HepG2 (cell line): ENCODE measurements at regions of chr9 and their contacts with region 1.

Region 1: GRCh38 chr9:32136700-32137339 is 247.6 kb upstream of the ACO1 start:
- DNase-seq: peak; percentile 98
- ATAC-seq: peak; percentile 100
- H3K4me3 ChIP-seq: no peak overlapping the region
- H3K27ac ChIP-seq: no peak overlapping the region
- H3K4me1 ChIP-seq: peaks cover 25% of the 10 kb centered on the region
- H3K27me3 ChIP-seq: no peaks in the 10 kb centered on the region
- CTCF ChIP-seq: peak; percentile 74
- EP300 ChIP-seq: peak; percentile 56 to 90; a peak in 2 of 4 replicates
- POLR2A ChIP-seq: no peak
- RAD21 ChIP-seq: peak; percentile 52; the same call in 1 of the 2 replicates

Region 2: GRCh38 chr9:31848505-31849285 is 288.1 kb before region 1 on chr9:
- CTCF ChIA-PET with region 1: no interaction called
- POLR2A ChIA-PET with region 1: interaction called, 4 read pairs
- in situ Hi-C with region 1: no loop called
- intact Hi-C with region 1: loop called (anchors 1 kb)
- DNase-seq: peak; percentile 72
- ATAC-seq: peak; percentile 100
- H3K4me3 ChIP-seq: peak overlapping the region; percentile 72 to 83 (median 78)
- H3K27ac ChIP-seq: peak overlapping the region; percentile 77
- H3K4me1 ChIP-seq: peaks cover 20% of the 10 kb centered on the region
- H3K27me3 ChIP-seq: no peaks in the 10 kb centered on the region; a peak in 1 of 5 replicates
- CTCF ChIP-seq: no peak
- EP300 ChIP-seq: no peak
- POLR2A ChIP-seq: peak; percentile 83 to 90
- RAD21 ChIP-seq: no peak

Region 3: GRCh38 chr9:32004431-32005076 is 132.3 kb before region 1 on chr9:
- CTCF ChIA-PET with region 1: no interaction called
- POLR2A ChIA-PET with region 1: no interaction called
- in situ Hi-C with region 1: no loop called
- intact Hi-C with region 1: loop called (anchors 5 kb)
- DNase-seq: peak; percentile 89
- ATAC-seq: peak; percentile 99
- H3K4me3 ChIP-seq: peak overlapping the region; percentile 41 to 49 (median 41); a peak in 5 of 6 replicates
- H3K27ac ChIP-seq: peak overlapping the region; percentile 88
- H3K4me1 ChIP-seq: peaks cover 23% of the 10 kb centered on the region
- H3K27me3 ChIP-seq: no peaks in the 10 kb centered on the region
- CTCF ChIP-seq: no peak
- EP300 ChIP-seq: peak in 1 of 2 experiments; percentile 49; a peak in 1 of 4 replicates
- POLR2A ChIP-seq: peak in 1 of 2 experiments; percentile 25; a peak in 1 of 4 replicates
- RAD21 ChIP-seq: no peak

Region 4: DNA sequence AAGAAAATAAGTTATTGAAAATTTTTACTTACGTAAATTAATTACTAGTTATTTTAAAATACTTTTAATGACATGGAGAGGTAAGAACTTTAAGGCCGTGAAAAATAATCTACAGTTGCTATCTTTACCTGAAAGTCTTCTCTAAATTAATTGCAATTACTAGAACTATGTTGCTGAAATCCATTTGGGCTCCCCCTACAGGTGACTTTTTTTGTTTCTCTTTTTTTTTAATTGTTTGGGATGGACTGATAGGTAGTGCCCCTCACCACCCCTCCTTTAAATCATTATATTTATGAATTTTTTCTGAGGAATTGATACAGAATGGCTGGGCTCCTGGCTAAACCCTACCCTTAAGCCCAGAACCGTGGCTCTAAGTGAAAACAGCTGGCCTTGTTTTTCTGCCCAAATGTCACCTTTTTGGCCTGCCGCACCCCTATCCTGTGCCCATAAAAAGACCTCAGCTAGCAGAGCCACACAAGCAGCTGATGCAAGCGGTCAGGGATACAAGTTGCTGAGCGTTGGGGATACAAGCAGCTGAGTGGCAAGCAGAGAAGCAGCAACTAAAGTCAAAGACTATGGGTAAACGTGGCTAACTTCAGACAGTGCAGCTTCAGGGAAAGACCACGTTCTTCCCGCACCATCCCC is 67.5 kb before region 1 on chr9:
- CTCF ChIA-PET with region 1: no interaction called
- POLR2A ChIA-PET with region 1: no interaction called
- in situ Hi-C with region 1: no loop called
- intact Hi-C with region 1: loop called (anchors 10 kb)
- DNase-seq: peak; percentile 2
- ATAC-seq: no peak
- H3K4me3 ChIP-seq: no peak overlapping the region
- H3K27ac ChIP-seq: no peak overlapping the region
- H3K4me1 ChIP-seq: no peaks in the 10 kb centered on the region
- H3K27me3 ChIP-seq: no peaks in the 10 kb centered on the region
- CTCF ChIP-seq: no peak
- EP300 ChIP-seq: no peak
- POLR2A ChIP-seq: no peak
- RAD21 ChIP-seq: no peak

Region 5: GRCh38 chr9:32258482-32258881 is 121.7 kb after region 1 on chr9:
- CTCF ChIA-PET with region 1: no interaction called
- POLR2A ChIA-PET with region 1: no interaction called
- in situ Hi-C with region 1: no loop called
- intact Hi-C with region 1: loop called (anchors 5 kb)
- DNase-seq: no peak
- ATAC-seq: no peak
- H3K4me3 ChIP-seq: no peak overlapping the region
- H3K27ac ChIP-seq: no peak overlapping the region
- H3K4me1 ChIP-seq: peaks cover 20% of the 10 kb centered on the region
- H3K27me3 ChIP-seq: no peaks in the 10 kb centered on the region
- CTCF ChIP-seq: no peak
- EP300 ChIP-seq: no peak
- POLR2A ChIP-seq: no peak
- RAD21 ChIP-seq: no peak

Region 6: DNA sequence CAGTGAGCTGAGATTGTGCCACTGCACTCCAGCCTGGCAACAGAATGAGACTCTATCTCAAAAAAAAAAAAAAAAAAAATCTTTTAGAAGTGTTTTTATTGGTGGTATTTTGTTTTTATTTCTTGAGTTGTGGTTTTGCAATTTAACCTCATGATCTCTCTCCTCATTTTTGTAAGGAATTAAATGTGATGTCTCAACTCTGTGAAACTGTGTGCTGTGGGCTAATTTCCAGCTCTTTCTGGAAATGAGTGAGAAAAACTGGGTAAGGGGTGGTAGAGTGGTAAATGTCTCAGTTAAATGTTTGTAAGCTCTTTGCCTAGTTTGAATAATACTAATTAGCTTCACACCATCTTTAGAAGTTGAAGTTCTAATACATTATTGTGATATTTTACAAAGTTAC is 276.6 kb after region 1 on chr9:
- CTCF ChIA-PET with region 1: no interaction called
- POLR2A ChIA-PET with region 1: no interaction called
- in situ Hi-C with region 1: no loop called
- intact Hi-C with region 1: no loop called
- DNase-seq: no peak
- ATAC-seq: no peak
- H3K4me3 ChIP-seq: no peak overlapping the region
- H3K27ac ChIP-seq: no peak overlapping the region
- H3K4me1 ChIP-seq: no peaks in the 10 kb centered on the region
- H3K27me3 ChIP-seq: no peaks in the 10 kb centered on the region
- CTCF ChIP-seq: no peak
- EP300 ChIP-seq: no peak
- POLR2A ChIP-seq: no peak
- RAD21 ChIP-seq: no peak